ENCODE measurements at regions of chr10 and their contacts with region 1.

Region 1: DNA sequence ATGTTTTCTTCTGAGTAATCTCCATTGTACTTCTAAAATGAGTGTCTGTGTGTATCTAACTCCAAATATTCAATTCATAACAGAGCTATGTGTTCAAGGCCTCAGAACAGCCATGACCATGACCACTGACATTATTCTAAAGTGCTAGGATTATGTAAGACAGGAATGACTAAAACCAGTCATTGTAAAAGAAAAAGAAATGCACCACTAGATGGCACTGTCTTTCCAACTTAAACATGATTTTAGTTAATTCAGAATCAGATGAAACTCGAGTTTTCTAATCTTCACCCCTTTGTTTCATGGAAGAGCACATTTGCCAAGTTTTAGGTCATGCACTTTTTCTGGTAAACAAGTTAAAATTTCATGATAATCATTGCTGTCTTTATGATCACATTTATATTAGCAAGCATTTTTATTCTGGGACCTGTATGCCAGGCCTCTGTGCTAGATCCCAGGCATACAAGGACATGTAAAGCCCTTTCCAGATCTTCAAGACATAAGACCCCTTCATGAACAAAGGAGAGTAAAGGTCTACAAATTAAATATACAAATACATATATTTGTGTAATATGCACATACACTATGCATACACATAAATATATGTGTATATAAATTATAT is 26.1 kb upstream of the RSU1 start:
- DNase-seq: peak in 1 of 2 experiments; percentile 58
- H3K4me3 ChIP-seq: no peak overlapping the region
- H3K27ac ChIP-seq: no peak overlapping the region
- H3K4me1 ChIP-seq: 0 out of 2 replicates have a peak, but pooled peaks cover 4% of the 10 kb centered on the region
- H3K27me3 ChIP-seq: no peaks in the 10 kb centered on the region
- CTCF ChIP-seq: peak; percentile 73

Region 2: DNA sequence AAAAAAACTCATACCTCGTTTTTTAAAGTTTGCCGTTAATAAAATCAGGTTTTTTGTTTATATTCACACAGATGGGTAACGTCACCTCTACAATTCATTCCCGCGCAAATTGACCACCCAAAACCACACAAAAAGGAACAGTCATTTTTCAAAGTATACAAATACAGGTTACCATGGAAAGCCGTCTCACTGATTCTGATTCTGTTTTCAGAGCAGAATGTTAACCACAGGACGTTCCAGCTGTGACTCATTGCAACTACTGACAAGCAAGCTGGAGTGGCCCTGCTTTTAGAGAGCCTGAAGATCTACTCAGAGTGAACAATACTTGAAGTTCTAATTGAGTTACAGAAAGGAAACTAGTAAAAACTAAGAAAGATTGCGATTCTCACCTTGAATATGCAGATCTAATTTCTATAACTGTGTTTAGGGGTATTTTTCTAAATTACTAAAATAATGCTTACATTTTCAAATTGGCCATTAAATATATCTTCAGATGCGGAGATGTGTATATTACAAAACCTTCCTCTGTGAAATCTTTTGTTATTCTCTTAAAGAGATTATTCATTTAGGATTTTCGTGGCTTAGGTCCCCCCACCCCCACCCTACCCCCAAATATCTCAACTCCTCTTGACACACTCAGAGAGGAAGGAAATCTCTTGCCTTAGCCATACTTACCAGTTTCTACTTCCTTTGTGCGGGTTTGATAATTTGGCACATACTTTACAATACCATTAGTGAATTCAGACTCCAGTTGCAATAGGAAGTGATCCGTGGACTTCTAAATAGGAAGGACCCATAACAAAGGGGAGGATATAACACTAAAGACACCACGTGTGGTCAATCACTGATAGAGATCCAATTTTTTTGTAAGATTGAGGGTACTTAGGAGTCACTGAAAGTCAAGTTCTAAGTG is 180.3 kb after region 1 on chr10:
- CTCF ChIA-PET with region 1: no interaction called
- POLR2A ChIA-PET with region 1: no interaction called
- intact Hi-C with region 1: loop called (anchors 10 kb)
- DNase-seq: peak; percentile 67 to 87
- H3K4me3 ChIP-seq: no peak overlapping the region
- H3K27ac ChIP-seq: no peak overlapping the region
- H3K4me1 ChIP-seq: peaks cover 11% of the 10 kb centered on the region
- H3K27me3 ChIP-seq: no peaks in the 10 kb centered on the region
- CTCF ChIP-seq: no peak

Region 3: GRCh38 chr10:17430647-17431355 is 587.4 kb after region 1 on chr10:
- CTCF ChIA-PET with region 1: no interaction called
- POLR2A ChIA-PET with region 1: no interaction called
- intact Hi-C with region 1: loop called (anchors 1 kb)
- DNase-seq: peak in 1 of 2 experiments; percentile 67
- H3K4me3 ChIP-seq: no peak overlapping the region
- H3K27ac ChIP-seq: no peak overlapping the region
- H3K4me1 ChIP-seq: no peaks in the 10 kb centered on the region
- H3K27me3 ChIP-seq: no peaks in the 10 kb centered on the region
- CTCF ChIP-seq: peak; percentile 84

Region 4: GRCh38 chr10:17872191-17873091 is 1029.1 kb after region 1 on chr10:
- CTCF ChIA-PET with region 1: no interaction called
- POLR2A ChIA-PET with region 1: no interaction called
- intact Hi-C with region 1: loop called (anchors 5 kb)
- DNase-seq: peak in 1 of 2 experiments; percentile 5
- H3K4me3 ChIP-seq: no peak overlapping the region
- H3K27ac ChIP-seq: no peak overlapping the region
- H3K4me1 ChIP-seq: no peaks in the 10 kb centered on the region
- H3K27me3 ChIP-seq: no peaks in the 10 kb centered on the region
- CTCF ChIP-seq: no peak

Measured in PC-9 (cell line).